ENCODE measurements at regions of chr15 and their contacts with region 1.

Region 1: DNA sequence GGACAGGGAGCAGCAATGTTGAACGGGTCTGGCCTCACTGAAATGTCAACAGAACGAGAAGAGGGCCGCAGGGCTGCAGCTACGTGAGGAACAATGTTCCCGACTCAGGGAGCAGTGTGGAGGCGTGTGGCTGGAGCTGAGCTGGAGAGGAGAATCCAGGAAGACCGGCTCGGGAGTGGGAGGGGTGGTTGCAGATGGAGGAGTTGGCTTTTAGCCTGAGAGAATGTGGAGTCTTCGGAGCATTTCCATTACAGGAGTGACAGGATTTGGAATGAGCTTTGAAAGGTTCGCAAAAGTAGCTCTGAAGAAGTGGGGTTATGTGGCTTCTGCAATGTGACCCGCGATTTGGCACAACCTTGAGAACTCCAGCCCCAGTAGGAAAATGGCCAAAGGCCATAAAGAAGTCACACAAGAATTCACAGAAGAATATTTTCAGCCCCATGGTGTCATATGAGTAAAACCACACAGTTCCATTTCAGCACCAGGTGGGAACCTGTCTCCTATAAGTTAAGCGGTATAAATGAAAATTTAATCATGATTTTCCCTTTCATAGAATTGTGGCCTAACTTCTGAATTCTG is 78.8 kb upstream of the NSMCE3 start:
- DNase-seq: peak in 2 of 3 donors; percentile 25 to 56
- ATAC-seq: peak; percentile 26 to 52
- H3K4me3 ChIP-seq: no peak overlapping the region
- H3K27ac ChIP-seq: no peak overlapping the region
- H3K4me1 ChIP-seq: no peaks in the 10 kb centered on the region
- H3K27me3 ChIP-seq: no peaks in the 10 kb centered on the region

Region 2: GRCh38 chr15:29403772-29404171 is 55.3 kb after region 1 on chr15:
- intact Hi-C with region 1: loop called in 1 of 4 experiments (anchors 10 kb)
- DNase-seq: no peak
- ATAC-seq: peak in 1 of 2 donors; percentile 36
- H3K4me3 ChIP-seq: no peak overlapping the region
- H3K27ac ChIP-seq: no peak overlapping the region
- H3K4me1 ChIP-seq: no peaks in the 10 kb centered on the region
- H3K27me3 ChIP-seq: no peaks in the 10 kb centered on the region

Measured in right cardiac atrium (tissue), 5 donors.